Activated naive CD4-positive, alpha-beta T cell treated with anti-CD3 and anti-CD28 coated beads for 36 hours (primary cell): ENCODE measurements at regions of chr1 and their contacts with region 1.

Region 1: GRCh38 chr1:161225534-161226319 is at the start of gene TOMM40L:
- DNase-seq: peak; percentile 95
- H3K4me3 Mint-ChIP-seq: peak within 1 kb of the TSS; percentile 100
- H3K27ac Mint-ChIP-seq: peak within 1 kb of the TSS; percentile 98
- H3K4me1 Mint-ChIP-seq: peaks cover 36% of the 10 kb centered on the region
- H3K27me3 Mint-ChIP-seq: no peaks in the 10 kb centered on the region
- total RNA-seq, gene TOMM40L: 13.2 to 14.3 TPM

Region 2: DNA sequence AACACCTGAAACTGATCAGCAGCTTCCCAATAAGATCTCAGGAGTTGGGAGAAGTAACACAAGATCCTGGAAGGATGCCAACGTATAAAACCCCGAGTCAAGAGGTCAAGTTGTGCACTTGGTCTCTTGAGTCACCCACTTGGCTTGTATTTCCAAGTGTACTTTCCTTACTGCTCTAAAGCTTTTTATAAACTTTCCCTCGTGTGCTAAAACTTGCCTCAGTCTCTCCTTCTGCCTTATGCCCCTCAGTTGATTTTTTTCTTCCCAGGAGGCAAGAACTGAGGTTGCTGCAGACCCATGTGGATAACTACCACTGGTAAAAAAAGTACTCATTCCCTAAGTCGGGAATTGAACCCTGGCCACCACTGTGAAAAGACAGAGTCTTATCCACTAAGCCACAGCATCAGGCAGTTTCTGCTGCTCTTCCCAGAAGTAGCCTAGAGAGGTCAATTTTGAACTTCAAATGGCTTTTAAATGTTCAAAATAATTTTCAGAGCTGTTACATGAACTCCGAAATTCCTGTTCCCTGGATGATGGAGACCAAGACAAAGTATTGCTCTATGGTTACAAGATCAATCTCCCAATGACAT is 300.0 kb before region 1 on chr1:
- CTCF ChIA-PET with region 1: no interaction called
- intact Hi-C with region 1: no loop called
- DNase-seq: no peak
- H3K4me3 Mint-ChIP-seq: no peak overlapping the region
- H3K27ac Mint-ChIP-seq: no peak overlapping the region
- H3K4me1 Mint-ChIP-seq: no peaks in the 10 kb centered on the region
- H3K27me3 Mint-ChIP-seq: no peaks in the 10 kb centered on the region

Region 3: DNA sequence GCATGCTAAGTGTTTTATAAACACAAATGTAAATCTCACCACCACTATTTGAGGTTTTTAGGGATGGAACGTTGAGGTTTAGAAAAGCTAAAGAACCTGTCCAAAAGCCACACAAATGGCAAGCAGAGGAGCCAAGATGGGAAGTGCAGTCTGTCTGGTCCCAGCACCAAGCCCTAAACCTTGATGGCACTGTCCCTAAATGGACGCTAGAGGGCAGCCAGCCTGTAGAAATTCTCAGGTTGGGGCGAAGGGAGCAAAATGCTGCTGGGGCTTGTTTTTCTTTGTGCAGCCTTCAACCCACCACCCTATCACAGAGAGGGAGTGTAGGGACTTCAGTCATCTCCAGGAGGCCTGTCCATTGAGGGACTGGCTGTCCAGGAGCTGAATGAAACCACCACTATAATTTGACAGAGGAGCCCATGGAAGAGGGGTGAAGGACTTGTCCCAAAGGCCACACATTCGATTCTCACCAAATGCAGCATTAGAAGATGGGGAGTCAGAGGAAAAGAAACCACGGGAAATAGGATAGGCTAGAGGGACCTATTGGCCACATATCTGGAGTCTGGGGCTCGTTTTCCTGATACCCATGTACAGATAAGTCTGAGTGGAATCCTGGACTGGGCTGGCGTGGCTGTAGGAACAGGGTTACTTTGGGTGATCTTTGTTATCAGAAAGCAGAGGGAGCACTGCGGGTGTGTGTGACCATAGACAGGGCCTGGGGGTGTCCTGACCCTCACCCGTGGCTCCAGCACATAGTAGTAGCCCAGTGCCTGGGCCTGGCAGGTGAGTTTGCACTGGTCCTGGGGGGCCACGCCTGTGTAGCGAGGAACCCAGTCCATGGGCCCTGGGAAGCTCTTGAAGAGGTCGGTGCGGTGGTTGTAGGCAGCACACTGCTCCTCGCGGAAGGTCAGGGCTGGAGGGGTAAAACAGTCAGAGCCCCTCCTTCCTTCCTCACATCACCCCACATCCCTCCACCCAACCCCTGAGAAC is 33.0 kb before region 1 on chr1:
- CTCF ChIA-PET with region 1: interaction called, 37 read pairs
- intact Hi-C with region 1: loop called (anchors 1 kb)
- DNase-seq: peak; percentile 84
- H3K4me3 Mint-ChIP-seq: no peak overlapping the region
- H3K27ac Mint-ChIP-seq: peak overlapping the region; percentile 51
- H3K4me1 Mint-ChIP-seq: peaks cover 34% of the 10 kb centered on the region
- H3K27me3 Mint-ChIP-seq: no peaks in the 10 kb centered on the region

Region 4: GRCh38 chr1:161238039-161238473 is 12.3 kb after region 1 on chr1 and contains the start of gene NR1I3:
- CTCF ChIA-PET with region 1: interaction called, 26 read pairs
- intact Hi-C with region 1: no loop called
- DNase-seq: no peak
- H3K4me3 Mint-ChIP-seq: no peak within 1 kb of the TSS
- H3K27ac Mint-ChIP-seq: no peak within 1 kb of the TSS
- H3K4me1 Mint-ChIP-seq: no peaks in the 10 kb centered on the region
- H3K27me3 Mint-ChIP-seq: no peaks in the 10 kb centered on the region
- total RNA-seq, gene NR1I3: not detected

Region 5: GRCh38 chr1:161305867-161306519 is 80.3 kb after region 1 on chr1:
- CTCF ChIA-PET with region 1: interaction called, 38 read pairs
- intact Hi-C with region 1: loop called (anchors 1 kb)
- DNase-seq: peak; percentile 89
- H3K4me3 Mint-ChIP-seq: peak overlapping the region; percentile 96
- H3K27ac Mint-ChIP-seq: peak overlapping the region; percentile 83
- H3K4me1 Mint-ChIP-seq: peaks cover 33% of the 10 kb centered on the region
- H3K27me3 Mint-ChIP-seq: no peaks in the 10 kb centered on the region

Region 6: DNA sequence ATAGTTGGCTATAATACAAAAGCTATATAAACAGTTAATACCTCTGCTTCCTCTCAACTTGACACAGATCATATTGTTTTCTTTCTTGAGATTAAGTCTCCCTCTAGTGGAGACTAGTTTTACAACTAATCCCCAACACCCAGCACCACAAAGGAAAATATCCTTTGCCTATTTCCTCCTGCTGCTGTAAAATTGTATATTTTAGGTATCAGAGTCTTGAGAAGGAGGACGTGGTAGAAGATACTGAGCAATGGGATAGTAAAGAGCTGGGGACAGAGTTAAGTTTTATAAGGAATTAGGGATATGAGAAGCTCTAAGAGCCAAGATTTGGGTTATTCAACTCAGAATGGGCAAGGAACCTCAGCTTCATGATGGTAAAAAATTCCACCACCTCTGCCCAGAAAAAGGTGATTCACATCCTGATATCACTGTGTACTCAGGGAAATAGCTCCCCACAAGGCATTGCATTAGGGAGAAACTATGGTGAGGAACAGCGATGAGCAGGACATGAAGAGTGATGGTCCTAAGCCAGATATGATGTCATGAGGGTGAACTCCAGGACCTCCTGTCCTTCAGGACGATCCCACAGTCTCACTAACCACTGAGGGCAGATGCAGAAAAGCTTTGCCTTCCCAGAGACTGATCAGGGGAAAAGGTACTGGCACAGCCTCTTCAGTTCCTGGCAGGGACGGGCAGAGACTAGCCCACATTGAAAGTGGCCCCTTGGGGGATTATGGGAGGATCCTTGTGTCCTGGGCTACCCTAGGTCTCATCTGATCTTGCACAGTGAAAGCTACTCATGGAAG is 156.7 kb after region 1 on chr1:
- CTCF ChIA-PET with region 1: interaction called, 179 read pairs
- intact Hi-C with region 1: loop called (anchors 1 kb)
- DNase-seq: no peak
- H3K4me3 Mint-ChIP-seq: no peak overlapping the region
- H3K27ac Mint-ChIP-seq: no peak overlapping the region
- H3K4me1 Mint-ChIP-seq: peaks cover 18% of the 10 kb centered on the region
- H3K27me3 Mint-ChIP-seq: no peaks in the 10 kb centered on the region